Dorsolateral prefrontal cortex (tissue), 120 donors: ENCODE measurements at regions of chr2 and their contacts with region 1.

Region 1: DNA sequence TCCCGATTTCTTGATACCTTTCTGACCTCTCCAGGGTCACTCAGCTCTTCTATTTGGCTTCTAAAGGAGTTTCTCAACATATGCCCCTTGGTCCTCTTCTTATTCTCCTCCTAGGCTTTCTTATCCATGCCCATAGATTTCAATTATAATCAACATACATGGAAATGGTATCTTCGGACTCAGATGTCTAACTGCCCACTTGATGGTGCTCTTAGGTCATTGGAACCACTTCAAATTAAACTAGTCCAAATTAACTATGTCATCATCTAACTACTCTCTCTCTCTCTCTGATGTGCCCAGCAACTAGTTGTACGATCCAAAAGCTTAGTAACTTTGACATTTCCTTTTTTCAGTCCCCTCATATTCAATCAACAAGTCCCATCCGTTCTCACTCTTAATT is 43.2 kb upstream of the GPR75 start:
- DNase-seq: no peak
- H3K4me3 ChIP-seq: no peak overlapping the region
- H3K27ac ChIP-seq: peak overlapping the region in 44 of 59 donors; percentile 3 to 82 (median 52)
- H3K27me3 ChIP-seq: no peaks in the 10 kb centered on the region
- CTCF ChIP-seq: peak in 28 of 56 donors; percentile 7 to 63 (median 38)

Region 2: DNA sequence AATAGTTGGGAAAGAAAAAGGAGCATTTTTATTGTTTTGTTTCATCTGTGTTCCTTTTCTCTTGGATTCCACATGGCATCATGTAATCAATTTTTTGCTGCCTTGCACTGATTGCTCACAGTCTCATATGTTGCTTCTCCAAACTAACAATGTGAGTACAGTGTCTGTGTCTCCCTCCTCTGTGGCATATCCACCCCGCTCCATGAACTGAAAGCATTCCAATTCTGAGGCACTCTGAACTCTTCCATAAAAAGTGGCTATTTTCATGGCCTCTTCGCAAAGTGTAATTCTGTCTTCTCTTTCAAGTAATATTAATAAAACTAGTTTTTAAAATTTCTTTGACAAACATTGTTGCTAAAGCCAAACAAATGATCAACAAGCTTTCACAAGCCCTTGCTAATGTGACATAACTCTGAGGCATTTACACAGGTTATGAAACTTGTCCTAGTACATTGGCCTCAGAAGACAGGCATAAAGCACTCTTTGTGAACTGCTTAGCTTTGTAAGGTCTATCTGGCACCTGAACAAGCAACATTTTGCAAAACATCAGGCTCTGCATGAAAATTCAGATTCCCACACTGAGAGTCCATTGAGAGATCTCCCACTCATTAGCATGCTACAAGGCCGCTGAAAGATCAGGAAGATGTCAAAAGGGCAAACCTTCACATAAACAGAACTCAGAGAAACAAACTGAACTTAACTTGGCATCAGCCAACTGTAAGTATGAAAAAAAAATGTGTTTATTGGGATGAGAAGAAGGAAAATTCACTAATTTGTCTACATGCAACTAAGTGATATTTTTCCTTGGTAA is 76.2 kb before region 1 on chr2:
- intact Hi-C with region 1: no loop called
- DNase-seq: no peak
- H3K4me3 ChIP-seq: peak overlapping the region in 16 of 59 donors; percentile 1 to 36 (median 13)
- H3K27ac ChIP-seq: peak overlapping the region; percentile 33 to 98 (median 87)
- H3K27me3 ChIP-seq: no peaks in the 10 kb centered on the region
- CTCF ChIP-seq: peak in 2 of 56 donors; percentile 4 to 10

Region 3: DNA sequence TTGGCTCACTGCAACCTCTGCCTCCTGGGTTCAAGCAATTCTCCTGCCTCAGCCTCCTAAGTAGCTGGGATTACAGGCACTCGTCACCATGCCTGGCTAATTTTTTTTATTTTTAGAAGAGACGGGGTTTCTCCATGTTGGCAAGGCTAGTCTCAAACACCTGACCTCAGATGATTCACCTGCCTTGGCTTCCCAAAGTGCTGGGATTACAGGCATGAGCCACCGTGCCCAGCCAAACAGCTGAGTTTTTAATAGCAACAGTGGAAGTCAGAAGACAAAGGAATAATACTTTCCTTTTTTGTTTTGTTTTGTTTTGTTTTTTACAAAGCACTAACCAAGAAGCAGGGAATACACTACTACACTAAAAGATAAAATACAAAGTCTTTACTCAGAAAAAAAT is 60.1 kb before region 1 on chr2:
- intact Hi-C with region 1: no loop called
- DNase-seq: no peak
- H3K4me3 ChIP-seq: no peak overlapping the region
- H3K27ac ChIP-seq: no peak overlapping the region
- H3K27me3 ChIP-seq: no peaks in the 10 kb centered on the region
- CTCF ChIP-seq: no peak

Region 4: GRCh38 chr2:53970724-53971602 is 68.0 kb after region 1 on chr2 and contains the start of gene PSME4:
- intact Hi-C with region 1: loop called in 1 of 2 experiments (anchors 10 kb)
- DNase-seq: peak; percentile 86 to 96 (median 93)
- H3K4me3 ChIP-seq: peak within 1 kb of the TSS; percentile 58 to 100 (median 94)
- H3K27ac ChIP-seq: peak within 1 kb of the TSS; percentile 69 to 97 (median 92)
- H3K27me3 ChIP-seq: no peaks in the 10 kb centered on the region
- CTCF ChIP-seq: peak in 13 of 56 donors; percentile 9 to 37 (median 19)
- total RNA-seq, gene PSME4: 25.8 to 76.6 (median 43.2) TPM

Region 5: DNA sequence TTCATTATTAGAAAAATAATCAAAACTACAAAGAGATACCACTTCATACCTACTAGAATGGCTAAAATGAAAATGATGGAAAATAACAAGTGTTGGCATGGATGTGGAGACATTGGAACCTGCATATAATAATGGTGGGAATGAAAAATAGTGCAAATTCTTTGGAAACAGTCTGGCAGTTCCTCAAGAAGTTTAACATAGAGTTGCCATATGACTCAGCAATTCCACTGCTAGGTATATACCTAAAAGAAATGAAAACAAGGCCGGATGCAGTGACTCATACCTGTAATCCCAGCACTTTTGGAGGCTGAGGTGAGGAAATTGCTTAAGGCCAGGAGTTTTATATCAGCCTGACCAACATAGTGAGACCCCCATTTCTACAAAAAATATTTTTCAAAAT is 170.8 kb after region 1 on chr2:
- intact Hi-C with region 1: no loop called
- DNase-seq: no peak
- H3K4me3 ChIP-seq: no peak overlapping the region
- H3K27ac ChIP-seq: no peak overlapping the region
- H3K27me3 ChIP-seq: no peaks in the 10 kb centered on the region
- CTCF ChIP-seq: no peak